MCF 10A (cell line): ENCODE measurements at regions of chr1 and their contacts with region 1.

Region 1: GRCh38 chr1:182789138-182790076 is at the start of gene NPL:
- DNase-seq: peak; percentile 80
- H3K4me3 Mint-ChIP-seq: peak within 1 kb of the TSS; percentile 86
- H3K27ac Mint-ChIP-seq: peak within 1 kb of the TSS; percentile 72
- H3K4me1 Mint-ChIP-seq: peaks cover 17% of the 10 kb centered on the region
- H3K27me3 Mint-ChIP-seq: no peaks in the 10 kb centered on the region
- CTCF ChIP-seq: no peak
- total RNA-seq, gene NPL: 4.5 and 6.2 TPM in 2 replicates

Region 2: GRCh38 chr1:182389619-182390047 is 399.8 kb before region 1 on chr1:
- CTCF ChIA-PET with region 1: no interaction called
- POLR2A ChIA-PET with region 1: no interaction called
- intact Hi-C with region 1: no loop called
- DNase-seq: peak; percentile 34
- H3K4me3 Mint-ChIP-seq: peak overlapping the region; percentile 100
- H3K27ac Mint-ChIP-seq: peak overlapping the region; percentile 100
- H3K4me1 Mint-ChIP-seq: peaks cover 36% of the 10 kb centered on the region
- H3K27me3 Mint-ChIP-seq: no peaks in the 10 kb centered on the region
- CTCF ChIP-seq: no peak

Region 3: GRCh38 chr1:182839209-182840065 is 50.0 kb after region 1 on chr1 and contains the start of gene DHX9:
- CTCF ChIA-PET with region 1: interaction called, 4 read pairs
- POLR2A ChIA-PET with region 1: interaction called, 6 read pairs
- intact Hi-C with region 1: loop called (anchors 2 kb)
- DNase-seq: peak; percentile 93
- H3K4me3 Mint-ChIP-seq: peak within 1 kb of the TSS; percentile 88
- H3K27ac Mint-ChIP-seq: peak within 1 kb of the TSS; percentile 80
- H3K4me1 Mint-ChIP-seq: peaks cover 32% of the 10 kb centered on the region
- H3K27me3 Mint-ChIP-seq: no peaks in the 10 kb centered on the region
- CTCF ChIP-seq: peak; percentile 17
- total RNA-seq, gene DHX9: 105 and 107 TPM in 2 replicates